PC-9 (cell line): ENCODE measurements at regions of chr7 and their contacts with region 1.

Region 1: GRCh38 chr7:7399707-7400106 is 136.0 kb downstream of the COL28A1 start:
- DNase-seq: no peak
- H3K4me3 ChIP-seq: no peak overlapping the region
- H3K27ac ChIP-seq: no peak overlapping the region
- H3K4me1 ChIP-seq: no peaks in the 10 kb centered on the region
- H3K27me3 ChIP-seq: no peaks in the 10 kb centered on the region
- CTCF ChIP-seq: no peak

Region 2: DNA sequence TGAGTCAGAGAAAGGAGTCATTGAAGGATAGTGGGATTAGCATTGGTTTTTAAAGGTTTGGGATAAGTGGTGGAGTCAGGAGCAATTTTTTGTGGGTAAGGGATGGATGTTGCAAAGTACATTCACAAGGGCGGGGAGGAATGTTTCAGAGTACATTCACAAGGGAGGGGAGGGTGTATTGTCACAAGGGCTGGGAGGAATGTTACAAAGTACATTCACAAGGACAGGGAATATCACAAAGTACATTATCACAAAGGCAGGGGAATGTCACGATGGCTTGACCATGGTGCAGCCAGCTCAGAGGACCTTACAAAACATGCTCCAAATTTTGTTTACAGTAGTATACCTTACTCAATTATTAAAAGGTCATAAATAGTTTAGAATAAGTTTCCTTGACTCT is 187.1 kb before region 1 on chr7:
- CTCF ChIA-PET with region 1: no interaction called
- POLR2A ChIA-PET with region 1: no interaction called
- intact Hi-C with region 1: no loop called
- DNase-seq: no peak
- H3K4me3 ChIP-seq: no peak overlapping the region
- H3K27ac ChIP-seq: no peak overlapping the region
- H3K4me1 ChIP-seq: no peaks in the 10 kb centered on the region
- H3K27me3 ChIP-seq: no peaks in the 10 kb centered on the region
- CTCF ChIP-seq: no peak

Region 3: GRCh38 chr7:7344583-7344982 is 55.1 kb before region 1 on chr7:
- CTCF ChIA-PET with region 1: no interaction called
- POLR2A ChIA-PET with region 1: no interaction called
- intact Hi-C with region 1: loop called (anchors 1 kb)
- DNase-seq: no peak
- H3K4me3 ChIP-seq: no peak overlapping the region
- H3K27ac ChIP-seq: no peak overlapping the region
- H3K4me1 ChIP-seq: no peaks in the 10 kb centered on the region
- H3K27me3 ChIP-seq: no peaks in the 10 kb centered on the region
- CTCF ChIP-seq: no peak

Region 4: GRCh38 chr7:7772397-7772821 is 372.7 kb after region 1 on chr7:
- CTCF ChIA-PET with region 1: no interaction called
- POLR2A ChIA-PET with region 1: no interaction called
- intact Hi-C with region 1: no loop called
- DNase-seq: no peak
- H3K4me3 ChIP-seq: no peak overlapping the region
- H3K27ac ChIP-seq: no peak overlapping the region
- H3K4me1 ChIP-seq: no peaks in the 10 kb centered on the region
- H3K27me3 ChIP-seq: no peaks in the 10 kb centered on the region
- CTCF ChIP-seq: no peak